PC-9 (cell line): ENCODE measurements at regions of chr3 and their contacts with region 1.

Region 1: DNA sequence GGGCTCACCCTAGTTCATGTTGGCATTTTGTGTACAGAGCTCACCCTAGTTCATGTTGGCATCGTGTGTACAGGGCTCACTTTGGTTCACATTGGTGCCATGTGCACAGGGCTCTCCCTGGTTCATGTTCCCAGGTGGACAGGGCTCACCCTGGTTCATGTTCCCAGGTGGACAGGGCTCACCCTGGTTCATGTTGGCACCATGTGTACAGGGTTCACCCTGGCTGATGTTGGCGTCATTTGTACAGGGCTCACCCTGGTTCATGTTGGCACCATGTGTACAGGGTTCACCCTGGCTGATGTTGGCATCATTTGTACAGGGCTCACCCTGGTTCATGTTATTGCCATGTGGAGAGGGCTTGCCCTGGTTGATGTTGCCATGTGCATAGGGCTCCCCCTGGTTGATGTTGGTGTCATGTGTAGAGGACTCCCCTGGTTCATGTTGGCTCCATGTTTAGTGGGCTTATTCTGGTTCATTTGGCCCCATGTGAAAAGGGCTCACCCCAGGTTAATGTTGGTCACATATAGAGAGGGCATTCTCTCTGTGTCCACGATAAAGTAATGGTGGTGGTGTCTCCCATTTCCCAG is 31.7 kb upstream of the NR2C2 start:
- DNase-seq: no peak
- H3K4me3 ChIP-seq: no peak overlapping the region
- H3K27ac ChIP-seq: no peak overlapping the region
- H3K4me1 ChIP-seq: no peaks in the 10 kb centered on the region
- H3K27me3 ChIP-seq: no peaks in the 10 kb centered on the region
- CTCF ChIP-seq: no peak

Region 2: GRCh38 chr3:14691239-14691638 is 224.5 kb before region 1 on chr3:
- CTCF ChIA-PET with region 1: no interaction called
- POLR2A ChIA-PET with region 1: no interaction called
- intact Hi-C with region 1: no loop called
- DNase-seq: no peak
- H3K4me3 ChIP-seq: no peak overlapping the region
- H3K27ac ChIP-seq: no peak overlapping the region
- H3K4me1 ChIP-seq: no peaks in the 10 kb centered on the region
- H3K27me3 ChIP-seq: peaks cover 58% of the 10 kb centered on the region
- CTCF ChIP-seq: no peak

Region 3: DNA sequence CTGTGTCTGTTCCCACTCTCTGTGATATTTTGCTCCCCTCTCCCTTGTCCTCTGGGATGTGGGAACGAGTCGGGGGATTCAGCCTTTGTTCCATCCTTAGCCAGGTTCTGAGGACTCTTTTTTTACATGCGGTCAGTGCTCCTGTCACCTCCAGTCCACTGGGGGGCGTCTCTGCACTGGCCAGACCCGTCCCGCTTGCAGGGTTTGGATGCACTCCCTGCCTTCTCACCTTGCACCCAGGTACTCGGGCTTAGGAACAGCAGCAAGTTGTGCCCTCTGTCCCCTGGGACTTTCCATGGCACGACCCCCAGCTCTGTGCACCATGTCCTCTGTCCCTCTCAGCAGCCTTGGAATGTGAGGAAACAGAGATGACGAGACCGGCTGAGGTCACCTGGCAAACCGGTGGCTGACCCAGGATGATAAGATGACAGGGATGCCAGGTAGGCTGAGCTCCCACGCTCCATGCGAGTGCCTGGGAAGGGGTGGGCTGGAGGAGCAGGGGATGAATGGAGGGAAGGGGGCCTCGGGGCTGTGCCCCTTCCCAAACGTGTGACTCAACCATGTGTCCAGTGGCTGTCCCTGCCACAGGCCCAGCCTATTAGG is 124.3 kb before region 1 on chr3:
- CTCF ChIA-PET with region 1: interaction called, 3 read pairs
- POLR2A ChIA-PET with region 1: no interaction called
- intact Hi-C with region 1: loop called (anchors 1 kb)
- DNase-seq: peak in 1 of 2 experiments; percentile 48
- H3K4me3 ChIP-seq: no peak overlapping the region
- H3K27ac ChIP-seq: no peak overlapping the region
- H3K4me1 ChIP-seq: no peaks in the 10 kb centered on the region
- H3K27me3 ChIP-seq: no peaks in the 10 kb centered on the region
- CTCF ChIP-seq: peak; percentile 81